HepG2 (cell line): ENCODE measurements at regions of chr4 and their contacts with region 1.

Region 1: GRCh38 chr4:26809811-26810210 is 50.8 kb upstream of the STIM2 start:
- DNase-seq: no peak
- ATAC-seq: no peak; the same call in 2 of the 3 replicates
- H3K4me3 ChIP-seq: no peak overlapping the region
- H3K27ac ChIP-seq: no peak overlapping the region
- H3K4me1 ChIP-seq: no peaks in the 10 kb centered on the region
- H3K27me3 ChIP-seq: peaks cover 0 to 13% of the 10 kb centered on the region in 2 experiments; a peak in 1 of 5 replicates
- CTCF ChIP-seq: no peak
- EP300 ChIP-seq: no peak
- POLR2A ChIP-seq: no peak
- RAD21 ChIP-seq: no peak

Region 2: GRCh38 chr4:26509681-26510333 is 300.0 kb before region 1 on chr4:
- CTCF ChIA-PET with region 1: no interaction called
- POLR2A ChIA-PET with region 1: no interaction called
- in situ Hi-C with region 1: no loop called
- intact Hi-C with region 1: no loop called
- DNase-seq: no peak
- ATAC-seq: no peak; the same call in 2 of the 3 replicates
- H3K4me3 ChIP-seq: no peak overlapping the region
- H3K27ac ChIP-seq: no peak overlapping the region
- H3K4me1 ChIP-seq: no peaks in the 10 kb centered on the region
- H3K27me3 ChIP-seq: no peaks in the 10 kb centered on the region; a peak in 1 of 5 replicates
- CTCF ChIP-seq: no peak
- EP300 ChIP-seq: no peak
- POLR2A ChIP-seq: no peak
- RAD21 ChIP-seq: no peak

Region 3: DNA sequence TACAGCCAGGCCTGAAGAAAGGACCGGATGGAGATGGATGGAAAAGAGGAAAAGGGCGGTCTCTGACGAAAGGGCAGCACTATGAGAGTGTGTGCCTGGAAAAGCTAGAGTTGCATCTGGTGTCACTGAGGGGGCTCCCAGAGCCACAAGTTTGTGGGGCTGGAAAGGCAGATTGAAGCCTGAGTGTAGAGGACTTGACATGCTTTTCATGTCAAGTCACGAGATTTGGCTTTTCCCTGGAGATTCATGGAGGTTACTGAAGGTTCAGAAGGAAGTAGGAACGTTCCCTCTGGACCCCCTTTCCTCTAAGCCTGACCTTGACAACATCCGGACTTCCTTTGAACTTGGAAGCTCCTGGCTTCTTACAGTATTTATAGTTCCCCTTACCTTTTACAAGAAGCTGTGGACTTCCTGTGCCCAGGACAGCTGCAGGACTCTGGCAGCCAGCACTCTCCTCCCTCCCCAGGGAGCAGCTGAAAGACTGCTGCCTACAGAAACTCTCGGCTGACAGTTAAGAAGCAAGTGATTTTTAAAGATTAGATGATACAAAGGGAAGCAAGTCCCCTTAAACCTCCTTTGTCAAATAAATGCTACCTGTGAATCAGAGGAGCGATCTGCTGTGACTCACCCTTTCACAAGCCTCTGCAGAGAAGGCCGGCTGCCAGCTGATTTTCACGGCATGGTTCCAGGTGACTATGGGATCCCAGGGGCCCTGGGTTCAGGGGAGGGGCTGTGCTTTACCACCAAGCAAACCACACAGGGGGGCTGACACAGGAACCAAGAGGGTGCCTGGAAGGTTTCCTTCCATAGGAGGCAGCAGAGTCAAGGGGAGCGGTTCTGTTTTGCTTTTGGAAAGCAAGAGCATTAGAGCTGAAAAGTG is 22.1 kb before region 1 on chr4:
- CTCF ChIA-PET with region 1: no interaction called
- POLR2A ChIA-PET with region 1: no interaction called
- in situ Hi-C with region 1: no loop called
- intact Hi-C with region 1: loop called (anchors 1 kb)
- DNase-seq: peak; percentile 32
- ATAC-seq: peak; percentile 87
- H3K4me3 ChIP-seq: peak overlapping the region in 2 of 3 experiments; percentile 23 to 36; a peak in 3 of 6 replicates
- H3K27ac ChIP-seq: no peak overlapping the region
- H3K4me1 ChIP-seq: peaks cover 15% of the 10 kb centered on the region
- H3K27me3 ChIP-seq: peaks cover 2 to 7% of the 10 kb centered on the region in 2 experiments; a peak in 2 of 5 replicates
- CTCF ChIP-seq: peak; percentile 42
- EP300 ChIP-seq: no peak
- POLR2A ChIP-seq: no peak
- RAD21 ChIP-seq: 0 out of 2 replicates have a peak, but pooled peaks have one; percentile 19